MCF 10A (cell line): ENCODE measurements at regions of chr17 and their contacts with region 1.

Region 1: DNA sequence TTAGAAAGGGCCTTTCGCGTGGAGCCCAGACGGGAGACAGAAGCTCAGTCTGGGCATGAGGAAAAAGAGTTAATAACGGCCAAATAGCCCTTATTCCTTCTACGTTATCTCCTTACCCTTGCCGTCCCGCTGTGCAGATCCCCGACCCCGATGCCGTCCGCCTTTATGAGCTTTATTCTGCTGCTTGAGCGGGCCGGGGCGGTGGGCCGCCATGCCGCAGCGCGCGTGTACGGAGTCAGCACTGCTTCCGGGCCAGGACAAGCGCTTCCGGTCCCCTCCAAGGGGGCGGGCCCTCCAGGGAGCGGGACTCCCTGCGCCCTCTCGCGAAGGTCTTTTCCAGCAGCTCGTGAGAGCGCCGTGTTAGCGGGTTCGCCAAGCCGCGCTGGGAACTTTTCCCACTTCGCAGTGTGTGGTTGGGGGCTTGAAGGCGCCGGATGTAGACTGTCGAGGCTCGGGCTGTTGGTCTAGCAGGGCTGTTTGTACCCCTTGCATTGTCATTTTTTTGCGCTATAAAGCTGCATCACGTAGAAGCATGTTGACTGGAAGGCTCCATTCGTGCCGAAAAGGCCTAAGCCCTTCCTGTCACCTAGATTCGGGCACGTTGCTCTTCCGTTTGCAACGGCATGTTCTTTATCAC is at the start of gene TSR1:
- DNase-seq: peak; percentile 93
- H3K4me3 Mint-ChIP-seq: peak within 1 kb of the TSS; percentile 96
- H3K27ac Mint-ChIP-seq: peak within 1 kb of the TSS; percentile 94
- H3K4me1 Mint-ChIP-seq: peaks cover 8% of the 10 kb centered on the region
- H3K27me3 Mint-ChIP-seq: no peaks in the 10 kb centered on the region
- CTCF ChIP-seq: no peak
- total RNA-seq, gene TSR1: 44.3 and 61.5 TPM in 2 replicates

Region 2: DNA sequence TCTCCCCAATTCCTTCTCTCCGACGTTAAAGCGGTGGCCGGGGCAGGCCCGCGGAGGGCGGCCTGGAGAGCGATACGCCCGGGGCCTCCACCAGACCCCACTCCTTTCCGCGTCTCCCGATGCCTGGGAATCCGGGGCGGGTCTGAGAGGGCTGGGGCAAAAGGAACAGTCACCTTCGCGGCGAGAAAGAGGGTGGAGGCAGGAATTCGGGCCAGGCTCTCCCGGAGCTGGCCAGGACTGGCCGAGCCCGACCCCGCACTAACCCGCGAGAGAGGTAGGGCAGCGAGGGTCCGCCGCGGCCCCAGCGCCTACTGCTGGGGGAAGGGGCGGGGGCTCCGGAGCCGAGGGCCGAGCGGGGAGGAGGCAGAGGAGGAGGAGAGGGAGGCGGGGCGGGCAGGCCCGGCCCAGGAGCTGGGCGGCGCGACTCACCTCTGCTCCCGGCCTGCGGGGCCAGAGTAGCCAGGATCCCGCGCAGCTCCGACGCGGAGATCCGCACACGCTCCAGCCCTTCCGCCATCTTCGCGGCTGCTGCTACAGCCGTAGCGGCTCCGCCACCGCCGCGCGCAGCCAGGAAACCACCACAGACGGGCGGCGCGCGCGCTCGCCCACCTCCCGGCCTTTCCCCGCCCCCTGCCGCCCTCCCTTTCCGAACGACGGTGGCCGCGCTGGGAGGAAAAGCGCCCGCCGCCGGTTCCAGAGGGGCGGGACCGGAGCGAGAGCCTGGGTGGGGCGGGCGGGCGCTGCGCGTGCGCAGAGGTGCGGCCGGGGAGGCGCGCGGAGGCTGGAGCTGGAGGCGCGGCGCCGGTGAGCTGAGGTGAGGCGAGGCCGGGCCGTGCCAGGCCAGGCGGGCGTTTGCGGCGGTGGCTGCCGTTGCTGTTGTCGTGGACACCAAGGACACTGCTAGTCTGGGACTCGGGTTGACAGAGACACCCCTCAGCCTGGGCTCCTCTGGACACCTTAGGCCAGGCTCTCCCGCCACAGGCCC is 32.8 kb before region 1 on chr17 and contains the starts of genes SMG6 and SRR:
- CTCF ChIA-PET with region 1: interaction called, 6 read pairs
- POLR2A ChIA-PET with region 1: interaction called, 111 read pairs
- intact Hi-C with region 1: no loop called
- DNase-seq: peak; percentile 92
- H3K4me3 Mint-ChIP-seq: peak within 1 kb of the TSS; percentile 85
- H3K27ac Mint-ChIP-seq: peak within 1 kb of the TSS; percentile 9
- H3K4me1 Mint-ChIP-seq: peaks cover 12% of the 10 kb centered on the region
- H3K27me3 Mint-ChIP-seq: no peaks in the 10 kb centered on the region
- CTCF ChIP-seq: no peak
- total RNA-seq, gene SMG6: 17.0 and 23.2 TPM in 2 replicates
- total RNA-seq, gene SRR: 7.7 and 16.6 TPM in 2 replicates

Region 3: GRCh38 chr17:2347547-2348307 is 11.4 kb after region 1 on chr17:
- CTCF ChIA-PET with region 1: interaction called, 15 read pairs
- POLR2A ChIA-PET with region 1: interaction called, 24 read pairs
- intact Hi-C with region 1: no loop called
- DNase-seq: peak; percentile 61
- H3K4me3 Mint-ChIP-seq: no peak overlapping the region
- H3K27ac Mint-ChIP-seq: no peak overlapping the region
- H3K4me1 Mint-ChIP-seq: no peaks in the 10 kb centered on the region
- H3K27me3 Mint-ChIP-seq: no peaks in the 10 kb centered on the region
- CTCF ChIP-seq: no peak

Region 4: GRCh38 chr17:2392252-2393173 is 56.2 kb after region 1 on chr17:
- CTCF ChIA-PET with region 1: no interaction called
- POLR2A ChIA-PET with region 1: interaction called, 27 read pairs
- intact Hi-C with region 1: no loop called
- DNase-seq: peak; percentile 91
- H3K4me3 Mint-ChIP-seq: peak overlapping the region; percentile 71
- H3K27ac Mint-ChIP-seq: peak overlapping the region; percentile 83
- H3K4me1 Mint-ChIP-seq: peaks cover 18% of the 10 kb centered on the region
- H3K27me3 Mint-ChIP-seq: no peaks in the 10 kb centered on the region
- CTCF ChIP-seq: no peak

Region 5: GRCh38 chr17:2406903-2407790 is 70.8 kb after region 1 on chr17:
- CTCF ChIA-PET with region 1: no interaction called
- POLR2A ChIA-PET with region 1: interaction called, 17 read pairs
- intact Hi-C with region 1: no loop called
- DNase-seq: peak; percentile 86
- H3K4me3 Mint-ChIP-seq: peak overlapping the region; percentile 65
- H3K27ac Mint-ChIP-seq: peak overlapping the region; percentile 98
- H3K4me1 Mint-ChIP-seq: peaks cover 36% of the 10 kb centered on the region
- H3K27me3 Mint-ChIP-seq: no peaks in the 10 kb centered on the region
- CTCF ChIP-seq: no peak

Region 6: GRCh38 chr17:2453325-2453724 is 117.0 kb after region 1 on chr17:
- CTCF ChIA-PET with region 1: no interaction called
- POLR2A ChIA-PET with region 1: no interaction called
- intact Hi-C with region 1: no loop called
- DNase-seq: no peak
- H3K4me3 Mint-ChIP-seq: no peak overlapping the region
- H3K27ac Mint-ChIP-seq: no peak overlapping the region
- H3K4me1 Mint-ChIP-seq: no peaks in the 10 kb centered on the region
- H3K27me3 Mint-ChIP-seq: no peaks in the 10 kb centered on the region
- CTCF ChIP-seq: no peak

Region 7: DNA sequence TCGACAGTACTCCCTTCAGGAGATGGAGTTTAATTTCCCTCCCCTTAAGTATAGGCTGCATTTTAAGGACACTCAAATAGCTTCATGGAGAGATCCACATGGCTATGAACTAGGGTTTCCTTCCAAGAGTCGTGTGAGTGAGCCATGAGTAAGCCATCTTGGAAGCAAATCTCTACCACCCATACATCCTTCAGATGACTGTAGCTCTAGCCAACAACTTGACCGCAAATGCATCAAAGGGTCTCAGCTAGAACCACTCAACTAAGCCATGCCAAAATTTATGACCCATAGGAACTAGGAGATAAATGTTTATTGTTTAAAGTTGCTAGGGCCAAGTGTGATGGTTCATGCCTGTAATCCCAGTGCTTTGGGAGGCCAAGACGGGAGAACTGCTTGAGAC is 131.9 kb after region 1 on chr17:
- CTCF ChIA-PET with region 1: no interaction called
- POLR2A ChIA-PET with region 1: no interaction called
- intact Hi-C with region 1: no loop called
- DNase-seq: no peak
- H3K4me3 Mint-ChIP-seq: no peak overlapping the region
- H3K27ac Mint-ChIP-seq: no peak overlapping the region
- H3K4me1 Mint-ChIP-seq: no peaks in the 10 kb centered on the region
- H3K27me3 Mint-ChIP-seq: no peaks in the 10 kb centered on the region
- CTCF ChIP-seq: no peak